Activated T-helper 1 cell treated with anti-CD3 and anti-CD28 coated beads, Interleukin-12 subunit alpha, Interleukin-12 subunit beta, Interleukin-2, Interleukin-4 antibody, amounts not matched to agents 30 ng/mL and 10 ng/mL and 1 ng/mL, durations not matched to agents 14 hours and 24 hours and 36 hours (primary cell): ENCODE measurements at regions of chr18 and their contacts with region 1.

Region 1: DNA sequence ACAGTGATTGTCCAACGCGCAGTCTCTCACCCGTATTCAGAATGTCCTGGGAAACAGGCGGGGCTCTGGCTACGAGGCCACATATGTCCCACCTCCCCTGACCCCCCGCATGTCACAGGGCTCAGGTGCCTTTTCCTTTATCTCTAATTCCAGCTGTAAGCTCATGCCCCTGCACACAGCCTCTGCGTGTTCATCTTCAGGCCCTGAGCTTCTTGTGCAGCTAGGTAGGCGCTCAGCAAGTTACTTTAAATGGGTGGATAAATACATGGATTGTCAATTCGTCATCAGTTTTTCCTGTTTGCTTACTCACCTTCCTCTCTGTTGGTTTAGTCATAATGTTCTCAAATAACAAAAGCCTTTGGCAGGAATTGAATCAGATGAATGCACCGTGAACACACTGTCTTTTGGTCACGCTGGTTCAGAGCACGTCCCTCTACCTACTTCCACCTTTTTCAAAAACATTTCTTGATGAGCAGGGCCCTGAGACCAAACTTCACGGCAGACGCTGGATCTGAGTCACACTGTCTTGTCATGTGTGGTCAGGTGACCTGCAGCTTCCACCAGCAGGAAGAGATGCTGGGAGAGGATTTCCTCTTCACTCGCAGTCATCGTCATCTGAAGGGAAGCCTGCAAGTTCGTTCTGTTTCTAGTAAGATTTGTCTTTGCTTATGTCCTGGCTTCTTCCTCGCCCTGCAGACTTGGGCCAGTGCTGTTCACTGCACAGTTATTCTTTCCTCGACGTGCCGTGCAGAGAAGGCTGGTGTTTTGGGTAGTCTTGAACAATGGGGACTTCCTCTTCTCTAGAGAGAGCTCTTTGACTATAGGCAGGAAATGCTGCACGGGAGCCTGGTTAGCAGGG is 138.1 kb downstream of the PTGR3 start:
- DNase-seq: peak; percentile 70
- H3K4me3 Mint-ChIP-seq: peak overlapping the region; percentile 78
- H3K27ac Mint-ChIP-seq: peak overlapping the region; percentile 96
- H3K4me1 Mint-ChIP-seq: peaks cover 31% of the 10 kb centered on the region
- H3K27me3 Mint-ChIP-seq: no peaks in the 10 kb centered on the region

Region 2: DNA sequence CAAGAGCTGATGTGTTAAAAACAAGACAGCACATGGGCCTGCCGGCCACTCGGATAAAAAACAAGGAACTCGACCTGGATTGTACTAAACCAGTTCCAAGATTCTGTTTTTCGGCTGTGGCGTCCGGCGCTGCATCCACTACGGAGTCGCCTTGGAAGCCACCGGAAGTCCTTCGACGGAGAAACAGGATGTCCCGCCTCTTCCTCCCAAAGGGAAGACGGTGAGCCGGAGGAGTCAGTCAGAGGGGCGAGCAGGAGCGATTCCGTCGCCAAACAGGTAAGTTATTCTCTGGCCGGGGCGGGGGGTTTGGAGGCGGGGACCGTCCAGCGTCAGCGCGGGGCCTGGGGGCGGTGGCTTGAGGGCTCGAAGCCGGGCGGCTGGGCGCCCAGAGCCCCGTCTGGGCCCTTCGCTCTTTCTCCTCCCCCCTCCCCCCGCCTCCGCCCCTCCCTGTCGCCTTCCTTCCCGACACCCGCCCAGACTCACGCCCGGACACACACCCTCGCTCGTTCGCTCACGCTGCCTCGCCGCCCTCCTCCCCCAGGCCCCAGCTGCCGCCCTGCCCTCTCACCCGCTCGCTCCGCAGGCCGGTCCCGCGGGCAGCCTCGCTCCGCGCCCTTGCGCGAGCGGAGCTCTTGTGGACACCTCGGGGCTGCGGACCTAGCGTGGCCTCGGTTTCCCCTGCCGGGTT is 473.0 kb before region 1 on chr18 and contains the start of gene ZNF407:
- intact Hi-C with region 1: loop called (anchors 2 kb)
- DNase-seq: peak; percentile 83
- H3K4me3 Mint-ChIP-seq: peak within 1 kb of the TSS; percentile 97
- H3K27ac Mint-ChIP-seq: peak within 1 kb of the TSS; percentile 96
- H3K4me1 Mint-ChIP-seq: peaks cover 45% of the 10 kb centered on the region
- H3K27me3 Mint-ChIP-seq: no peaks in the 10 kb centered on the region
- total RNA-seq, gene ZNF407: 19.8 and 21.4 TPM in 2 replicates

Region 3: DNA sequence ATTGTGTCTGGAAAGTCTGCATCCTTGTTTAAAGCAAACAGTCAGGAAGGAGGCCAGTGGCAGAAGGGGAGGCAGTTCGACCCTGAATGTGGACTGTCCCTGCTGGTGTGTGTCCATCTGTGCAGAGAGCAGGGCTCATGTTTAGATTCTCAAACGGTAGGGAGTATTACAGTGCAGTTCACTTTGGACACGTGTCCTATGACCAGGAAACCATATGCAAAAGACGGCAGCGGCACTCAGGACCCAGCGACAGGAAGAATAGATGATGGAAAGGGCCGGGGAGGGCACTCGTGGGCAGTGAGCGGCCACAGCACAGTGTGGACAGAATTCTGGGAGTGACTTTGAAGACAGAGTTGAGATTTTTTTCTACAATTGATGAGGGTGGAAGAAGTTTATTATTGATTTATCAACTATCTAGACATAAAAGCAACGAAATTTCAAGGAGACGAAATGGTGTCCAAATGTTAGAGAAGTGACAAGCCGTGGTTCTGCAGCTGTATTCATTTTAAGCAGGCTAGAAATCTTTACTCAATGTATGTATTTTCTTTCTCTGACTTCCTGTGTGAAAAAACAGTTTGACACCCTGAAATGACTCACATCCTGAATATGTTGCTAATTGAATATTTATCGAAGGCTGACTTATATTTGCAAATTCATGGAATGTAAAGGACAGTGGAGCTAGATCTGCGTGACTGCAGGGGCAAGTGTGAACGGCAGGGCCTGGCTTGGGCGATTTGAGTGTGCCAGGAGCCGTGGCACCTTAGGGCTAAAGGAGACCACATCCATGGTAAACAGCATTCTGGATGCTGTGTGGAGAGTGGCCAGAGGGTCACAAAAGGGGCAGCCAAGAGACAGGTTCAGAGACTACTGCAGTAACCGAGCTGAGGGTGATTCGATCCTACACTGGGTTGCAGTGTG is 76.1 kb before region 1 on chr18:
- intact Hi-C with region 1: loop called (anchors 1 kb)
- DNase-seq: no peak
- H3K4me3 Mint-ChIP-seq: peak overlapping the region; percentile 65
- H3K27ac Mint-ChIP-seq: peak overlapping the region; percentile 76
- H3K4me1 Mint-ChIP-seq: peaks cover 51% of the 10 kb centered on the region
- H3K27me3 Mint-ChIP-seq: no peaks in the 10 kb centered on the region

Region 4: GRCh38 chr18:75173125-75173432 is 102.2 kb after region 1 on chr18:
- intact Hi-C with region 1: no loop called
- DNase-seq: no peak
- H3K4me3 Mint-ChIP-seq: no peak overlapping the region
- H3K27ac Mint-ChIP-seq: no peak overlapping the region
- H3K4me1 Mint-ChIP-seq: no peaks in the 10 kb centered on the region
- H3K27me3 Mint-ChIP-seq: peaks cover 8% of the 10 kb centered on the region

Region 5: DNA sequence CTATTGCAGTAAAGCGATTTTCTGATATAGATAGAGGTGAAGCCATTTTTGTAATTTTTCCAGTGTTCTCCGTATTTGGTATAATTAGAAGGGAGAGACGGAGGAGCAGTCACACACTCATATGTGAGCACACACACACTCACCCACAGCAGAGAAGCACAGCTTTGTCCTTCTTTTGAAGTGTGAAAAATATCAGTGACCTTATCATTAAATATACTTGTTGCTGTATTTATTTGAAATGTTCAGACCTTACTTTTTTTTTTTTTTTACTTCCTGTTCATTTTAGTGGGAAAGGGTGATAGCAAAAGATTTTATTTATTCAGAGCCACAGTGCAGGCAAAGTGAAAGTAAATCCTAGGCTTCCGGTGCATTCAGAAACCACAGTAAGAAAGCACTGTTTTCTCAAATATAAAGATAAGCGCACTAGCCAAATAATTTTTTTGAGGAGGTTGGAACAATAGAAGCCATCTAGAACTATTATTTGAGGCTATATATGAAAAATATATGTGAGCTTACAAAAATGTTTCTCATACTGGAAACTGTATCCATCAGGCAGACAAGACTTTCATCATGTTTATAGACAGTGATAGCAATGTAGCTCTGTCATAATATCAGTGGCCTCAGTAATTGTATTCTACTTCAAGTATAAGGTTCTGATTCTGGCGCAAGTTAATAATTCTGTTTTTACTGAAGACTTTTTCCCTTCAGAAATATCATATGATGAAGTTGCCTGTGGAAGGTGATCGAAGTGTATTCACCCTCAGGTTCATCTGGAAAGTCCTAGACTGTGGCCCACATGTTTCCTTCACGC is 177.0 kb after region 1 on chr18:
- intact Hi-C with region 1: loop called (anchors 1 kb)
- DNase-seq: no peak
- H3K4me3 Mint-ChIP-seq: peak overlapping the region; percentile 88
- H3K27ac Mint-ChIP-seq: peak overlapping the region; percentile 15
- H3K4me1 Mint-ChIP-seq: peaks cover 39% of the 10 kb centered on the region
- H3K27me3 Mint-ChIP-seq: peaks cover 2% of the 10 kb centered on the region